ENCODE measurements at regions of chr1 and their contacts with region 1.

Region 1: DNA sequence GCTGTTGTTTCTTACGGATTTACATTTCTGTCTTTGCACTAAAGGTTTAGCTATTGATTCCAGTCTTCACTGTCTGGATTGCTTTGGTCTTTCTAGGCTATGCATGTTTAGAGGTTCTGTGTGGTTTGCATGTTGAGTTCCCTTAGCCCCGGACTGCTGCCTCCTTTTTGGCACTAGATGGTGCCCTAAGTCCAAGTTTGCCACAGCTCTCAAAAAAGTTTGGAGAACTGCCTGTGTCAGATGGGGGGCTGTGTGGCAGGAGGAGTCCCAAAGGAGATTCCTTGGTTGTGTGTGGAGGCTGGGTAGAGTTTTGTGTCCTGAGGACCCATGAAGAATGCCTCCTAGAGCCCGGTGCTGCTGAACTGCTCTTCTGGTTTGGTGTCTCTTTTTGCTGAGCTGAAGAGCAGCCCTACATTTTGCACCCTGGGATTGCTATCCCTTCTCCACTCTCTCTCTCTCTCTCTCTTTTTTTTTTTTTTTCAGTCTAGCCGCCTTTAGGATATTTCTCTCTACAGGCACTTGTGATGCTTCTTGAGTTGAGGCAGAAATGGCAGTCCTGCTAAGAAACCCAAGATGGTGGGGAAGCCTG is 74.4 kb downstream of the PTGS2 start:
- DNase-seq: peak; percentile 83
- H3K4me3 Mint-ChIP-seq: no peak overlapping the region
- H3K27ac Mint-ChIP-seq: no peak overlapping the region
- H3K4me1 Mint-ChIP-seq: no peaks in the 10 kb centered on the region
- H3K27me3 Mint-ChIP-seq: no peaks in the 10 kb centered on the region
- CTCF ChIP-seq: peak; percentile 91

Region 2: GRCh38 chr1:186482661-186483255 is 123.1 kb before region 1 on chr1:
- CTCF ChIA-PET with region 1: interaction called, 17 read pairs
- POLR2A ChIA-PET with region 1: interaction called, 3 read pairs
- intact Hi-C with region 1: loop called (anchors 1 kb)
- DNase-seq: peak; percentile 80
- H3K4me3 Mint-ChIP-seq: no peak overlapping the region
- H3K27ac Mint-ChIP-seq: no peak overlapping the region
- H3K4me1 Mint-ChIP-seq: peaks cover 7% of the 10 kb centered on the region
- H3K27me3 Mint-ChIP-seq: no peaks in the 10 kb centered on the region
- CTCF ChIP-seq: peak; percentile 99

Region 3: DNA sequence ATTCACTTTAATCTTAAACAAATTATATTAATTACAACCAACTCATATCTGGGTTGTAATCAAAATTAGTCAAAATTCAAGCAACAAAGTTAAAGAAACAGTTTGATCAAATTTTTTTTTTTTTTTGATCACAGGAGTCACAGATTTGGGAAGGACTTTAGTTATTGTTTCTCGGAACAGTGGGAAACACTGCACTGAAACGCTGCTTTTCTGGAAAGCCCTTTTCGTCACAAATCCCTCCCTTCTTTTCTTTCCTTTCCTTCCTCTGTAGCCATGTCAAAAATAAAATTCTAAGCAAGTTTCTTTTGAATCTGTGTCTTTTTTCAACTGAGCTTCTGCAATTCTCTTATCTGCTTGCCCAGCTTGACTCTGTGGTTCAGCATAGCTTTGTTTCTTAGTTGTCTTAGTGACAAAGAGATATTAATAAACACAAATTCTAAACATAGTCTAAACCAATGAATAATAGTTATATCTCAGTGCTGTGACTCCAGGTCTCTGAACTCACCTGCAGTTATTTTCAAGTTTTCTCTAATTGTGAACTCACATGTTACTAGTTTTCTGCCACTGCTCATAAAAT is 20.6 kb after region 1 on chr1:
- CTCF ChIA-PET with region 1: interaction called, 20 read pairs
- POLR2A ChIA-PET with region 1: no interaction called
- intact Hi-C with region 1: no loop called
- DNase-seq: no peak
- H3K4me3 Mint-ChIP-seq: no peak overlapping the region
- H3K27ac Mint-ChIP-seq: no peak overlapping the region
- H3K4me1 Mint-ChIP-seq: no peaks in the 10 kb centered on the region
- H3K27me3 Mint-ChIP-seq: no peaks in the 10 kb centered on the region
- CTCF ChIP-seq: no peak

Region 4: GRCh38 chr1:186689376-186689775 is 83.5 kb after region 1 on chr1:
- CTCF ChIA-PET with region 1: interaction called, 134 read pairs
- POLR2A ChIA-PET with region 1: no interaction called
- intact Hi-C with region 1: no loop called
- DNase-seq: no peak
- H3K4me3 Mint-ChIP-seq: no peak overlapping the region
- H3K27ac Mint-ChIP-seq: no peak overlapping the region
- H3K4me1 Mint-ChIP-seq: no peaks in the 10 kb centered on the region
- H3K27me3 Mint-ChIP-seq: no peaks in the 10 kb centered on the region
- CTCF ChIP-seq: no peak

Region 5: GRCh38 chr1:186915555-186915954 is 309.7 kb after region 1 on chr1:
- CTCF ChIA-PET with region 1: interaction called, 35 read pairs
- POLR2A ChIA-PET with region 1: no interaction called
- intact Hi-C with region 1: loop called (anchors 1 kb)
- DNase-seq: no peak
- H3K4me3 Mint-ChIP-seq: no peak overlapping the region
- H3K27ac Mint-ChIP-seq: no peak overlapping the region
- H3K4me1 Mint-ChIP-seq: peaks cover 5% of the 10 kb centered on the region
- H3K27me3 Mint-ChIP-seq: no peaks in the 10 kb centered on the region
- CTCF ChIP-seq: no peak

Region 6: GRCh38 chr1:186994897-186995296 is 389.0 kb after region 1 on chr1:
- CTCF ChIA-PET with region 1: interaction called, 77 read pairs
- POLR2A ChIA-PET with region 1: no interaction called
- intact Hi-C with region 1: no loop called
- DNase-seq: no peak
- H3K4me3 Mint-ChIP-seq: no peak overlapping the region
- H3K27ac Mint-ChIP-seq: no peak overlapping the region
- H3K4me1 Mint-ChIP-seq: no peaks in the 10 kb centered on the region
- H3K27me3 Mint-ChIP-seq: no peaks in the 10 kb centered on the region
- CTCF ChIP-seq: no peak

Measured in MCF 10A (cell line).